Dorsolateral prefrontal cortex (tissue), 120 donors: ENCODE measurements at regions of chr22 and their contacts with region 1.

Region 1: DNA sequence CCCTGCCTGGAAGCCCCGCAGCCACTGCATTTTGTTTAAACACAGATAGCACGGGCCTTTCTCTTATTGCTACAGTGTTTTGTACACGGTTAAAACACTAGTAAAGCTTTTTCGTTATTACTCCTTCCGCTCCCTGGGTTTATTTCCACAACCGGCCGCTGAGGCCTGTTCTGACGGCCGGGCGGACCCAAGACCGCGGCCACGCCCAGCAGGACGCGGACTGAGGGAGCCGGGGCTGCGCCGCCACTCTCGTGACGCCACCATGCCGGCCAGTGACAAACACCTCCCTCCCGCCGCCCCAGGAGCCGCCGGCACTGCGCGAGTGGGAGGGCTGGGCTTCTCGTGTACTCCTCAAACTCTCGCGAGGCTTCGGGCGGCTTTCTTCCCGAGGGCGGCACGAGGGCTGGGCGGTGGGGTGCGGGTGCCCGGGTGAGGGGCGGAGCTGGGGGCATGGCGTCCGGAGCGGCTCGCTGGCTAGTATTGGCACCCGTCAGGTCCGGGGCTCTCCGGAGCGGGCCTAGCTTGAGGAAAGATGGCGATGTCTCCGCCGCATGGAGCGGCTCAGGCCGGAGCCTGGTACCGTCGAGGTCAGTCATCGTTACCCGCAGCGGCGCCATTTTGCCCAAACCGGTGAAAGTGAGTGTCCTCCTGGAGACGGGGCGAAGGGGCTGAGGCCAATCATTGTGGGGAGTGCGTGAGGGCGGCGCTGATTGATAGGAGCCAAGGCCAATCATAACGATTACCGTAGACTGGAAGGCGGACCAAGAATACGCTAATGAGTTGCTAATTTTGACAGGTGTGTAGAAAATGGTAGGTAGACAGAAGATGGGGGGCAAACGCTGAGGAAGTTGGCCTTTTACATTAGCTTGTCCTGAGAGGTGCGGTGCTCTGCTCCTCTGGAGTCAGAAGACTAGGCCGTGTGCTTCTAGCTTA is at the start of gene SMDT1:
- DNase-seq: peak; percentile 97 to 100 (median 99)
- H3K4me3 ChIP-seq: peak within 1 kb of the TSS; percentile 59 to 92 (median 79)
- H3K27ac ChIP-seq: peak within 1 kb of the TSS; percentile 94 to 100 (median 99)
- H3K27me3 ChIP-seq: no peaks in the 10 kb centered on the region
- CTCF ChIP-seq: peak in 29 of 56 donors; percentile 4 to 56 (median 27)
- total RNA-seq, gene SMDT1: 58.2 to 115 (median 88.2) TPM

Region 2: DNA sequence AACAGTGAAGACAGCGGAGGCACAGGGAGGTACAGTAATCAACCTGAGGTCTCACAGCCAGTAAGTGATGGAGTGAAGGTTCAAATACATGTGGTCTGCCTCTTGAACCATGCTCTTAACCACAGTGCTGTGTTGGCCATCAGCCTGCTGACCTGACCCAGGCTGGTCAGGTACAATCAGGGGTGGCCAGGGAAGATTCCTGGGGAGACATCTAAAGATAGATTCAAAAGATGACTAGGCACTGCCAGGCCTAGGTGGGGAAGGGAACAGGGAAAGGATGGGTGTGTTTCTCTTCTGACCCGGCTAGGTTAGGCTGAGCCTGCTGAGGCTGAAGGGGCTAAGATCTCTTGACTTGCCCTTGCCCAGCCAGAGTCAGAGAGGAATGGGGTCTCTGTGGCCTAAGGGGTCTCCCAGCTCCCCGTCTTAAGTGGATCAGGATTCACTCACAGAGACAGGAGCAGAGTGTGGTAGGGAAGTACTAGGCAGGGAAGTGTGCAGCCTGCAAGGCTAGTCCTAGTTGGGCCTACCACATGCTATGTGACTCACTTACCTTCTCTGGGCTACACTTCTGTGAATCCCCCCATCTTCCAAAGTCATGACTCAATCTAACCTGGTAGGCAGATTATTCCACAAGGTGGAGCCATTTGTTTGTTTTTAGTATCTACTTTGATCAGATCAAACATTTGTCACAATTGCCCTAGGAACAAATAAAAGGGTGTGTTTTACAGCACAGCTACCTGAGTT is 257.1 kb before region 1 on chr22:
- intact Hi-C with region 1: loop called in 1 of 2 experiments (anchors 10 kb)
- DNase-seq: no peak
- H3K4me3 ChIP-seq: no peak overlapping the region
- H3K27ac ChIP-seq: no peak overlapping the region
- H3K27me3 ChIP-seq: no peaks in the 10 kb centered on the region
- CTCF ChIP-seq: peak; percentile 34 to 80 (median 62)

Region 3: GRCh38 chr22:41966607-41967240 is 112.9 kb before region 1 on chr22:
- intact Hi-C with region 1: loop called in 1 of 2 experiments (anchors 5 kb)
- DNase-seq: peak in 6 of 10 donors; percentile 46 to 60 (median 56)
- H3K4me3 ChIP-seq: no peak overlapping the region
- H3K27ac ChIP-seq: peak overlapping the region in 54 of 59 donors; percentile 2 to 85 (median 60)
- H3K27me3 ChIP-seq: no peaks in the 10 kb centered on the region
- CTCF ChIP-seq: peak in 54 of 56 donors; percentile 9 to 73 (median 50)

Region 4: DNA sequence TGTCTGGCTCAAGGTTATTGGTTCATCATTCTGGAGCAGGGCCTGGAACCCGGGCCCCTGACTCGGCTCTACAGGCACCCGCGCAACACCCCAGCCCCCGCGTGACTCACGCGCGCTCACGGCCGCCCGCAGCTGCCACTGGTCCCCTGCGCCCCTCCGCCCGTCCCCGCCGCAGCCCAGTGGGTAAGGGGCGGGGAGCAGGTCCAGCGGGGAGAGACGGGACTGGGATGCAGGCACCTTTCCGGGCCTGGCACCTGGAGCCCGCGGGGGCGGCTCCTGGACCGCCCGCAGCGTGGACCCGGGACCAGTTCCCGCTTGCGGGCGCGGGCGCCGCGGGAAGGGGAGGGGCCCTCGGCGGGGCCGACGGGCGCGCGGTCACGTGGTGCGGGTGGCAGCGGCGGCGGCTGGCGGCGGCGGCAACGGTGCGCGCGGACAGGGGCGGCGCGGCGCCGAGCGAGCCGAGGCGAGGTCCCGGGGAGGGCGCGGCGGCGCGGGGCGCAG is 103.1 kb before region 1 on chr22:
- intact Hi-C with region 1: loop called (anchors 5 kb)
- DNase-seq: peak in 8 of 10 donors; percentile 45 to 85 (median 68)
- H3K4me3 ChIP-seq: peak overlapping the region; percentile 45 to 83 (median 71)
- H3K27ac ChIP-seq: peak overlapping the region in 55 of 59 donors; percentile 50 to 92 (median 83)
- H3K27me3 ChIP-seq: no peaks in the 10 kb centered on the region
- CTCF ChIP-seq: no peak

Region 5: DNA sequence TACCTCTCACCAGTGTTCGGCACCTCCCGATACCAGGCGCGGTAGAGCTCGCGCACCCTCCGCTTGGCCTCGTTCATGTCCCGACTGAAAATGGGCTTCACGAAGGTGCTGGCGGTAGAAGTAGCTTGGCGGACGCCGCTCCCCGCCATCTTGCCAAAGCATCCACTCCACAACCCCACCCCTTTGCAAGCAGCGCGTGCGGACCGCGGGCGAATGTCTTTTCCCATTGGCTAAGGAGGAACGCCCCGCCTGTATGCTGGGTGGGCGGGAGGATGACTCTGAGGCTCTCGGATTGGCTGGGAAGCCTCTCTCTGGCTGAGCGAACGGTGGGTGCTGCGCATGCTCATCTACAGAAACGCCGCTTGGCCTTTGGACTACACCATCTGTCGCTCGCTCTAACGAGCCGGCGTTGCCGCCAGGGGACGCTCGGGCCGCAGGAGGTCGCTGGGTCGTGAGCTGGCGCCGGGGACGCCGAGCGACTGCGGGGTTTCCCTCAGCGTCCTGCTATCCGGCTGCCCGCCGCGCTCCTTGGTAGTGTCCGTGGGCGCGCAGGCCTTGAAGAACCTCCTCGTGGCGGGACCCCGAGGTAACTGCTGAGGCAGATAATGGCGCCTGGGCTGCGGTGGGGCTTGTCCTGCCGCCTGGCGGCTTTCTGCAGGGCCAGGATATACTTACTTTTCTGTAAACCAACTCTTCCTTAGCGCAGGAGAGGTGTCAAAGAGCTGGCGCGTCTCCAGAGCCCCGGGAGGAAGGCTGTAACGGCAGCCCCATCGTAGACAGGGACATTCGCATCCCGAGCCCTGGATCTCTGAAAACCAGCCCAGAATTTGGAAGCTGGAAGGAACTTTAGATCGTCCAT is 11.2 kb after region 1 on chr22 and contains the start of gene NDUFA6:
- intact Hi-C with region 1: loop called in 1 of 2 experiments (anchors 1 kb)
- DNase-seq: peak; percentile 99
- H3K4me3 ChIP-seq: peak within 1 kb of the TSS; percentile 66 to 99 (median 92)
- H3K27ac ChIP-seq: peak within 1 kb of the TSS; percentile 73 to 99 (median 94)
- H3K27me3 ChIP-seq: no peaks in the 10 kb centered on the region
- CTCF ChIP-seq: peak; percentile 74 to 99 (median 96)
- total RNA-seq, gene NDUFA6: 33.6 to 81.3 (median 55.8) TPM